Ovary (tissue), 10 donors: ENCODE measurements at regions of chr9 and their contacts with region 1.

Region 1: DNA sequence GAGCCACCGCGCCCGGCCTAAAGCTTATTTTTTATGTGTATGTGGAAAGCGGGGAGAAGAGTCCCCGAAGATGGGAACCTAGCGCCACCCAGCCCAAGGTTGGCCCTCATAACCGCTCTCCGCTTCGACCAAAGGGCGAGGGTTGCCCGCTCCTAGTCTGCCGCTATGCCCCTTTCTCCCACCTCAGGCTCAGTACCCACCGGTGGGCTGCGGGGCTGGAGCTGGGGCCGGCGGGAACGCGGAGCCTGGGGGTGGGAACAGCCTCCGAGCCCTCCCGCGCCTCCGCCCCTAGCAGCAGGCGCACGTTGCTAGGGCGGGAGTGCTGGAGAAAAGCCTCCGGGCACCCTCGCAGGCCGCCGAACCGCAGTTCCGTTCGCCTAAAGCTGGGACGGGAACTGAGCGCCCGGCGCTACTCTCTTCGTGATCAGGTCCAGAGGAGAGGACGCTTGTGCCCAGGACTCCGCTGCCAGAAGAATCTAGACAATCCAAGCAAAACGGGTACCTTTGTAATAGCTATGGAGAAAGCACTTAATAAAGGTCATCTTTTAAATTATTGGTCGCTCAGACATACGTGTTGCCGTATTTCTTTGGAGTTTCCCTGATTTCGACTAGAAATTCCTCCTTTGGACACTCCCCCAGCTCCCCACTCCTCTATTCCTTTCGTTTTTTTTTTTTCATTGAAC is at the start of gene WDR31:
- DNase-seq: peak; percentile 79 to 92 (median 83)
- H3K4me3 ChIP-seq: peak within 1 kb of the TSS; percentile 82
- H3K27ac ChIP-seq: peak within 1 kb of the TSS; percentile 54 to 64
- H3K4me1 ChIP-seq: peaks cover 5% of the 10 kb centered on the region
- H3K27me3 ChIP-seq: no peaks in the 10 kb centered on the region
- CTCF ChIP-seq: peak in 1 of 3 donors; percentile 18
- EP300 ChIP-seq: no peak
- POLR2A ChIP-seq: peak; percentile 61
- total RNA-seq, gene WDR31: 1.7 to 5.3 (median 3.4) TPM

Region 2: GRCh38 chr9:113376634-113377567 is 36.7 kb after region 1 on chr9 and contains the start of gene HDHD3:
- intact Hi-C with region 1: loop called in 1 of 4 experiments (anchors 5 kb)
- DNase-seq: peak; percentile 82 to 90 (median 84)
- H3K4me3 ChIP-seq: peak within 1 kb of the TSS; percentile 53
- H3K27ac ChIP-seq: peak within 1 kb of the TSS; percentile 61 to 64
- H3K4me1 ChIP-seq: peaks cover 10% of the 10 kb centered on the region
- H3K27me3 ChIP-seq: no peaks in the 10 kb centered on the region
- CTCF ChIP-seq: no peak
- EP300 ChIP-seq: no peak
- POLR2A ChIP-seq: peak; percentile 65
- total RNA-seq, gene HDHD3: 15.4 to 23.9 (median 21.1) TPM

Region 3: GRCh38 chr9:114196979-114197622 is 856.9 kb after region 1 on chr9:
- intact Hi-C with region 1: no loop called
- DNase-seq: no peak
- H3K4me3 ChIP-seq: no peak overlapping the region
- H3K27ac ChIP-seq: no peak overlapping the region
- H3K4me1 ChIP-seq: peaks cover 2% of the 10 kb centered on the region
- H3K27me3 ChIP-seq: no peaks in the 10 kb centered on the region
- CTCF ChIP-seq: no peak
- EP300 ChIP-seq: no peak
- POLR2A ChIP-seq: no peak